Naive thymus-derived CD4-positive, alpha-beta T cell (primary cell): ENCODE measurements at regions of chr7 and their contacts with region 1.

Region 1: GRCh38 chr7:49166441-49166840 is 242.1 kb downstream of the CDC14C start:
- DNase-seq: no peak
- ATAC-seq: no peak
- H3K4me3 ChIP-seq: no peak overlapping the region
- H3K4me3 Mint-ChIP-seq: no peak overlapping the region
- H3K27ac ChIP-seq: no peak overlapping the region
- H3K27ac Mint-ChIP-seq: no peak overlapping the region
- H3K4me1 ChIP-seq: no peaks in the 10 kb centered on the region
- H3K4me1 Mint-ChIP-seq: no peaks in the 10 kb centered on the region
- H3K27me3 ChIP-seq: no peaks in the 10 kb centered on the region
- H3K27me3 Mint-ChIP-seq: no peaks in the 10 kb centered on the region

Region 2: DNA sequence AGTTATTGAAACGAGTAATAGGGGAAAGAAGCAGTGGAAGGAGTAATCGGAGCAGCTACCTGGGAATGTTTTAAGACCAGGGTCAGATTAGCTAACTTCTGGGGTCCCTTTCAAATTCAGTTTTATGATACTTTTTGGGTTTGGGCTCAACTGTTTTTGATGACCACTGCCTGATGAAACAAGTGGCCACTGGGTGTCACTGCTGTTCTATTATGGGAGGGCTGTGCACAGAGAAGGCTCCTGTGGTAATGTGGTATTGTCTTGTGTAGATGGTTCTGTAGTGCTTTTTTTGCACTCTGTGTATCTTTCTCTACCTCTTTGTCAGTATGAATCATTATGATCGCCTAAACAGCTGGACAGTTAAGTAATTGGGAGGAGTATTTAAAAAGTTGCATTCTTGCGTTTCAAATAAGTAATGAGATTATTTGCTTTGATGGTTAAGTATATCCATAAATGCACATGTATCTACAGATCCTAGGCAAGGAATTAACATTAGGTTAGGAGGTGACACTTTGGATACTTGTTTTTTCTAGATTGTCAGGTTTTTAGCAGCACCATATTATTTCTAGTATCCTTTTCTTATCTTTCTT is 866.8 kb before region 1 on chr7:
- CTCF ChIA-PET with region 1: no interaction called
- POLR2A ChIA-PET with region 1: no interaction called
- intact Hi-C with region 1: loop called in 1 of 2 experiments (anchors 2 kb)
- DNase-seq: peak in 3 of 9 donors; percentile 5 to 33 (median 22)
- ATAC-seq: peak; percentile 66
- H3K4me3 ChIP-seq: no peak overlapping the region
- H3K4me3 Mint-ChIP-seq: no peak overlapping the region
- H3K27ac ChIP-seq: no peak overlapping the region
- H3K27ac Mint-ChIP-seq: no peak overlapping the region
- H3K4me1 ChIP-seq: no peaks in the 10 kb centered on the region
- H3K4me1 Mint-ChIP-seq: peaks cover 0 to 7% (median 0%) of the 10 kb centered on the region in 7 donors
- H3K27me3 ChIP-seq: no peaks in the 10 kb centered on the region
- H3K27me3 Mint-ChIP-seq: peaks cover 2 to 11% (median 5%) of the 10 kb centered on the region in 5 donors

Region 3: DNA sequence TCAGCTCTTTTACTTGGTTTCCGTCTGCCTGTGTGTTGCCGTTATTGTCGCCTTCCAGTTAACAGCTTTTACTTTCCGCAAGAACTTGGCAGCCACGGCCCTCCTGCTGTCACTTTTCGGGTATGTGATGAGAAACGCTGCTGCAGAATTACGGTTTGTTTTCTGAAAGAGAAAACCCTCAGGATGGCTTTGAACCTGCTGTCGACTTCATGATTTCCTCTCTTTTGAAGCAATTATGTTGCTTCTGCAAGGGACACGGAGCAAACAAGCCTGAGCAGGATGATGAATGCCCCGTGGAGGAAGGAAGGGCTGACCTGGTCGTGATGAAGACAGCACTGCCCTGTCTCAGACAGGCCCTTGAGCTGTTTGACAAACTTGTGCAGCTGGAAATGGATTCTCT is 655.4 kb before region 1 on chr7:
- CTCF ChIA-PET with region 1: no interaction called
- POLR2A ChIA-PET with region 1: no interaction called
- intact Hi-C with region 1: no loop called
- DNase-seq: peak in 1 of 9 donors; percentile 13
- ATAC-seq: no peak
- H3K4me3 ChIP-seq: no peak overlapping the region
- H3K4me3 Mint-ChIP-seq: peak overlapping the region in 3 of 10 donors; percentile 12 to 34 (median 16)
- H3K27ac ChIP-seq: no peak overlapping the region
- H3K27ac Mint-ChIP-seq: peak overlapping the region in 1 of 9 donors; percentile 25
- H3K4me1 ChIP-seq: no peaks in the 10 kb centered on the region
- H3K4me1 Mint-ChIP-seq: peaks cover 0 to 14% (median 2%) of the 10 kb centered on the region in 7 donors
- H3K27me3 ChIP-seq: no peaks in the 10 kb centered on the region
- H3K27me3 Mint-ChIP-seq: no peaks in the 10 kb centered on the region